CD4-positive, alpha-beta memory T cell (primary cell): ENCODE measurements at regions of chr12 and their contacts with region 1.

Region 1: GRCh38 chr12:12334367-12335040 is 15.5 kb downstream of the MANSC1 start:
- DNase-seq: peak; percentile 48 to 61 (median 55)
- H3K4me3 ChIP-seq: no peak overlapping the region
- H3K4me3 Mint-ChIP-seq: peak overlapping the region in 3 of 8 donors; percentile 26 to 38 (median 29)
- H3K27ac ChIP-seq: no peak overlapping the region
- H3K27ac Mint-ChIP-seq: peak overlapping the region in 3 of 7 donors; percentile 32 to 63 (median 45)
- H3K4me1 ChIP-seq: peaks cover 9% of the 10 kb centered on the region
- H3K4me1 Mint-ChIP-seq: peaks cover 8 to 24% (median 11%) of the 10 kb centered on the region in 4 donors
- H3K27me3 ChIP-seq: no peaks in the 10 kb centered on the region
- H3K27me3 Mint-ChIP-seq: no peaks in the 10 kb centered on the region

Region 2: GRCh38 chr12:12349711-12350665 is 15.5 kb after region 1 on chr12 and contains the start of gene MANSC1:
- CTCF ChIA-PET with region 1: interaction called, 11 read pairs
- POLR2A ChIA-PET with region 1: interaction called, 8 read pairs
- intact Hi-C with region 1: loop called (anchors 1 kb)
- DNase-seq: peak; percentile 56 to 61 (median 58)
- H3K4me3 ChIP-seq: peak within 1 kb of the TSS; percentile 36 to 42
- H3K4me3 Mint-ChIP-seq: peak within 1 kb of the TSS; percentile 68 to 80 (median 74)
- H3K27ac ChIP-seq: peak within 1 kb of the TSS; percentile 58
- H3K27ac Mint-ChIP-seq: peak within 1 kb of the TSS; percentile 57 to 91 (median 88)
- H3K4me1 ChIP-seq: peaks cover 18% of the 10 kb centered on the region
- H3K4me1 Mint-ChIP-seq: peaks cover 27 to 42% (median 31%) of the 10 kb centered on the region in 4 donors
- H3K27me3 ChIP-seq: no peaks in the 10 kb centered on the region
- H3K27me3 Mint-ChIP-seq: no peaks in the 10 kb centered on the region
- total RNA-seq, gene MANSC1: 0.35 to 0.44 TPM